ENCODE measurements at regions of chr1 and their contacts with region 1.

Region 1: DNA sequence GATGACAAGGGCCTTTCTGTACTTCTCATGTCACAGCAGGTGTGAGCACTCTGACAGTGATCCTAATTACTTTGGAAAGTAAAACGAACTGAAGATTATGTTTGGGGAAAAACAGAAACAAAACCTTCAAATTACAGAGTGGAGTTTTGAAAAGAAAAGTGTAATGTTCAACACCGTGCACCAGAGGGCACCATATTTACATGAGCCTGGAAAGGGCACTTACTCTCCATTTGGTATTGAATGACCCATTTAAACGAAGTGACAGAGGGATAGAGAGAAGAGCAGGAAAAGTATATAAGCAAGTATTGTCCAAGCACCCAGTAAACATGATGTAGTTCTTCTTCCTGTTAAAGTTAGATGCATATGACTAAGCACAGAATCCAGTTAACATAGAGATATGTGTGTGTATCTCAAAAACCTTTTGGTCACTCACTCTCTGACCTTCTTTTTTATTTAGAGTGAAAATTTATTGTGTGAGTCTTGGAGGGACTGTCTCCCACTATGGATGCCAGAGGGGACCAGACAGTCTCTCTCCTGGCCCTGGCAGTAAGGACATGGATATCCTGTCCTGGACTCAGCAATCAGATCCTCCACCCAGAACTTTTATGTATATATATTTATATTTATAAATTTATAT is 3.8 kb upstream of the RGSL1 start:
- DNase-seq: peak; percentile 71
- CTCF ChIP-seq: peak; percentile 62

Region 2: GRCh38 chr1:182588500-182589452 is 142.6 kb after region 1 on chr1 and contains the start of gene RNASEL:
- in situ Hi-C with region 1: loop called (anchors 10 kb)
- DNase-seq: peak; percentile 57
- CTCF ChIP-seq: no peak

Region 3: DNA sequence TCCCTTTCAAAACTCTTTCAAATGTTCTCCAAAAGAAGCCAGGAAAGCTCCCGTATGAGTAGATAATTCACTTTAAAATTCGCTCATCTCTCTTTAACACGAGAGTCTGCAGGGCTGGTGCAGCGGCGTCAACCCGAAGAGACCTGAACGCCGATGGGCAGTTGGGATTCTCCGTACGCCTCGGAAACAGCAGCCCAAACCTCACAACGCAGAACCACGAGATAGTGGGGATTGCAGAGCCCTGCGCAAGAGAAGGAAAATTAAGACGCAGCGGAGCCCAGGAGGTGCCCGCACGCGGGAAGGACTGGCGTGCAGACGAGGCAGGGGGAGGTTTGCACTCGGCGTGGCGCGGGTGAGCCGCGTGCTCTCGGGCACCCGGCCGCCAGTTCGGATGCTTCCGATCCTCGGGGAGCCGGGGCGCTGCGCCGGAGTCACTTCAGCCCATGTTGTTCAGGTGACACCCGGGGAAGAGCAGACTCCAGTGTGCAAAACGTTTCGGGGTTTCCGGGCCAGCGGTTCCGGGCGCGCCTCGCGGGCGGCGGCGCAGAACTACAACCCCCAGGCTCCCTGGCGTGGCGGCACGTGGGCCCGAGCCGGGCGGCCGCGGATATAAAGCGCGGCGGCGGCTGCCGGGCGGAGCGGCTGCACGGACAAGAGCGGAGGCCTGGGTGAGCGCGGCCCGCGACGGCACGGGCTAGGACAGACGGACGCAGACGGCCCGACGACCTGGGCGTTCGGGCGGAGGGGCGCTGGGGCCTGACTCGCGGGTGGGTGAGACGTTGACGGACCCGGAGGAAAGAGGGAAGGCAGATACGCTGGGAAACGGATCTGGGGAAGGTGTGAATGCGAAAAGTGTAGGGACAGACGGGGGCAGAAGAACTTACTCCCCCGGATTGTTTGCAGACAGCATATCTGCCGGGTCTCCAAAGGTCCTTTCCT is 343.3 kb after region 1 on chr1 and contains the start of gene NPL:
- in situ Hi-C with region 1: loop called (anchors 10 kb)
- DNase-seq: peak; percentile 90
- CTCF ChIP-seq: no peak

Region 4: GRCh38 chr1:182839209-182840065 is 393.3 kb after region 1 on chr1 and contains the start of gene DHX9:
- in situ Hi-C with region 1: no loop called
- DNase-seq: peak; percentile 98
- CTCF ChIP-seq: no peak